PC-9 (cell line): ENCODE measurements at regions of chr19 and their contacts with region 1.

Region 1: GRCh38 chr19:55549500-55550320 is 4.4 kb upstream of the SBK3 start:
- DNase-seq: peak; percentile 89 to 94
- H3K4me3 ChIP-seq: peak overlapping the region; percentile 54
- H3K27ac ChIP-seq: peak overlapping the region; percentile 96
- H3K4me1 ChIP-seq: peaks cover 63% of the 10 kb centered on the region
- H3K27me3 ChIP-seq: no peaks in the 10 kb centered on the region
- CTCF ChIP-seq: no peak

Region 2: DNA sequence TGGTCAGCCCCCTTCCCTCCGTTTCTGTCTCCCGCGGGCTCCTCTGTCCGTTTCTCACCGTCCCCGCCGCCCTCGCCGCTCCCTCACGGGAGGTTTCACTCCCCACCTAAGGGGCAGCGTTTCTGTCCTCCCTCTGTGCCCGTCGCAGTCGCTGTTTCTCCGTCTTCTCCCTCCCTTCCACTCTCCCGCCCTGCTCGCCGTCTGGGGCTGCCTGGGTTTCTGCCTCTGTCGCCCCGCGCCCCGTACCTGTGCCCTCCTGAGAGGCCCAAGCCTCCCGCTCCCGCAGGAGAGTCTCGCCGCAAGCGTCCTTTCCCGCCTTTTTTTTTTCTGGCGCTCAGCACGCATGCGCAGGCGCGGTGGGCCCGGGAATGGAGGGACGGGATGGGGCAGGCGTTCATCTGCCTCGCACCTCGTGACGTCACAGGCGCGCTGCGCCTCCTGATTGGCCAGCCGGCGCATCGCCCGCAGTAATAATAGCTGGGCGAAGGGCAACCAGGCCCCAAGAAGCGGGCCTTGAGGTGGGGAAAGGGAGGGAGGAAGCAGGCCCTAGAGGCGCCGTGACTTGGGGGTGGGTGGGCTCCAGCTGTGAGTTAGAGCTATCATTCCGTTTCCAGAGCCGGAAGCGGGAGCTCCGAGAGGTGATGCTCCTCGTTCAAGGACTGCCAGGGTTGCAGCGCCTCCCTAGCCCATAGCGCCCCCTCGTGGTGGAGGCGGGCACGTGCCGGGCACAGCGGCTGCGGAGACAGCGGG is 46.0 kb before region 1 on chr19:
- CTCF ChIA-PET with region 1: no interaction called
- POLR2A ChIA-PET with region 1: interaction called, 22 read pairs
- intact Hi-C with region 1: no loop called
- DNase-seq: peak; percentile 62 to 96
- H3K4me3 ChIP-seq: peak overlapping the region; percentile 27; the same call in 1 of the 2 replicates
- H3K27ac ChIP-seq: no peak overlapping the region
- H3K4me1 ChIP-seq: no peaks in the 10 kb centered on the region
- H3K27me3 ChIP-seq: peaks cover 27% of the 10 kb centered on the region
- CTCF ChIP-seq: peak; percentile 99

Region 3: DNA sequence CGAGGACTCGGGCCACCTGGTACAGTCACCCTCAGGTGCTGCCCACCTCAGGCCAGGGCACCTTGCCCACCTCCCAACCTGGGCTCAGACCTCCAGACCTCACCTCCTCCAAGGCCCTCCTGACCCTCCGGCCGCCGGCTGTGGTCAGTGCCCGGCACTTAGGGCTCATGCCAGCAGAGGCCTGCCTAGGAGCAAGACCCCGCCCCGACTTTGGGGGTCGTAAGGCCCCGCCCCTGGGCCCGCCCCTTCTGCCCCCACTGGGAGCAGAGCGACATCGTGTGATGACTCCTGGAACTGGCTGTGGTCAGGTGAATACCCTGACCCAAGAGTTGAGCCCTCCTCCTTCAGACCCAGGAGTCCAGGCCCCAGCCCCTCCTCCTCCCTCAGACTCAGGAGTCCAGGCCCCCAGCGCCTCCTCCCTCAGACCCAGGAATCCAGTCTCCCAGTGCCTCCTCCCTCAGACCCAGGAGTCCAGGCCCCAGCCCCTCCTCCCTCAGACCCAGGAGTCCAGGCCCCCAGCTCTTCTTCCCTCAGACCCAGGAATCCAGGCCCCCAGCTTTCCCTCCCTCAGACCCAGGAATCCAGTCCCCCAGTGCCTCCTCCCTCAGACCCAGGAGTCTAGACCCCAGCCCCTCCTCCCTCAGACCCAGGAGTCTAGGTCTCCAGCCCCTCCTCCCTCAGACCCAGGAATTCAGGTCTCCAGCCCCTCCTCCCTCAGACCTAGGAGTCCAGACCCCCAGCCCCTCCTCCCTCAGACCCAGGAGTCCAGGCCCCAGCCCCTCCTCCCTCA is 12.6 kb before region 1 on chr19 and contains the start of gene SBK2:
- CTCF ChIA-PET with region 1: interaction called, 10 read pairs
- POLR2A ChIA-PET with region 1: interaction called, 5 read pairs
- intact Hi-C with region 1: no loop called
- DNase-seq: peak in 1 of 2 experiments; percentile 31
- H3K4me3 ChIP-seq: no peak within 1 kb of the TSS
- H3K27ac ChIP-seq: no peak within 1 kb of the TSS
- H3K4me1 ChIP-seq: peaks cover 19% of the 10 kb centered on the region
- H3K27me3 ChIP-seq: no peaks in the 10 kb centered on the region
- CTCF ChIP-seq: no peak
- total RNA-seq, gene SBK2: 3.5 and 3.9 TPM in 2 replicates

Region 4: GRCh38 chr19:55599468-55600279 is 50.0 kb after region 1 on chr19 and contains the start of gene FIZ1:
- CTCF ChIA-PET with region 1: interaction called, 5 read pairs
- POLR2A ChIA-PET with region 1: interaction called, 44 read pairs
- intact Hi-C with region 1: loop called (anchors 1 kb)
- DNase-seq: peak; percentile 93 to 98
- H3K4me3 ChIP-seq: peak within 1 kb of the TSS; percentile 91
- H3K27ac ChIP-seq: peak within 1 kb of the TSS; percentile 94
- H3K4me1 ChIP-seq: peaks cover 22% of the 10 kb centered on the region
- H3K27me3 ChIP-seq: no peaks in the 10 kb centered on the region
- CTCF ChIP-seq: 0 out of 2 replicates have a peak, but pooled peaks have one; percentile 16
- total RNA-seq, gene FIZ1: 25.2 and 25.4 TPM in 2 replicates

Region 5: GRCh38 chr19:55653758-55654539 is 104.2 kb after region 1 on chr19:
- CTCF ChIA-PET with region 1: no interaction called
- POLR2A ChIA-PET with region 1: interaction called, 14 read pairs
- intact Hi-C with region 1: no loop called
- DNase-seq: peak; percentile 99 to 100
- H3K4me3 ChIP-seq: peak overlapping the region; percentile 72
- H3K27ac ChIP-seq: peak overlapping the region; percentile 95
- H3K4me1 ChIP-seq: peaks cover 25% of the 10 kb centered on the region
- H3K27me3 ChIP-seq: no peaks in the 10 kb centered on the region
- CTCF ChIP-seq: peak; percentile 97

Region 6: DNA sequence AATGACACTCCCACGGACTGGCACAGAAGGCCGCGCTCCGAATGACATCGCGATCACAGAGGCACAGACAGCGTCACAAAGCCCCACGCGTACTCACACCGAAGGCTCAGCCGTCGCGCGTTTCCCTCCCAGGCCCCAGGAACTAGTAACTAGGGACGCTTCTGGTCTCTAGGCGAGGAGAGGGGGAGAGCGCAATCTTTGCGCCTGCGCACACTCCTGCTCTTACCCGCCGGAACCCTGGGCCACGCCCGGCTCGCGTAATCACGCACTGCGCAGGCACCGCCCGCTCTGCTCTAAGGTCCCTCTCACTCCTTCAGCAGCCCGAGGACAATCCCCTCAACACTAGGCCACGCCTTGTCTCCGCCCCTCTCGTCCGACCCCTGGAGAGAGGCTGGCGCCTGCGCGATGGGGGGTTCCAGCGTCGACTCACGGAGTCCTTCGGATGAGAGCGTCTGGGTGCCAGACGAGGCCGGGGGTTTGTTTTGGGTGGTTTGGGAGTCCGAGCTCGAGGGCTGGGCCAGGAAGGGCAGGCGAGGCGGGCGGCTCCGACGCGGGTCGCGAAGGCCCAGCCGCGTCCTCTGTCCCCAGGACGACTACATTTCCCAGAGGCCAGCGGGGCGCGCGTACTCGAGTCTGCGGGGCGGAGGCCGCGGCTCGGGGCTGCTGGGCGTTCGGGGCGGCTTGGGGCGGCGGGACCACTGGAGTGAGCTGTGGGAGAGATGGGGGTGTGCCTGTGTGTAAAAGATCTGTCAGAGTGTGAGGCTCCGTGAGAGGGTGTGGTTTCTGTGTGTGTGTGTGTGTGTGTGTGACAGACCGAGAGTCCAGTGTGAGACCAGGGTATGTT is 958.0 kb after region 1 on chr19 and contains the start of gene ZNF471:
- CTCF ChIA-PET with region 1: no interaction called
- POLR2A ChIA-PET with region 1: no interaction called
- intact Hi-C with region 1: no loop called
- DNase-seq: peak; percentile 44 to 60
- H3K4me3 ChIP-seq: peak within 1 kb of the TSS; percentile 49
- H3K27ac ChIP-seq: no peak within 1 kb of the TSS
- H3K4me1 ChIP-seq: no peaks in the 10 kb centered on the region
- H3K27me3 ChIP-seq: 0 out of 2 replicates have a peak, but pooled peaks cover 10% of the 10 kb centered on the region
- CTCF ChIP-seq: no peak
- total RNA-seq, gene ZNF471: 0.57 and 0.78 TPM in 2 replicates